SK-N-SH (cell line): ENCODE measurements at regions of chr11 and their contacts with region 1.

Region 1: DNA sequence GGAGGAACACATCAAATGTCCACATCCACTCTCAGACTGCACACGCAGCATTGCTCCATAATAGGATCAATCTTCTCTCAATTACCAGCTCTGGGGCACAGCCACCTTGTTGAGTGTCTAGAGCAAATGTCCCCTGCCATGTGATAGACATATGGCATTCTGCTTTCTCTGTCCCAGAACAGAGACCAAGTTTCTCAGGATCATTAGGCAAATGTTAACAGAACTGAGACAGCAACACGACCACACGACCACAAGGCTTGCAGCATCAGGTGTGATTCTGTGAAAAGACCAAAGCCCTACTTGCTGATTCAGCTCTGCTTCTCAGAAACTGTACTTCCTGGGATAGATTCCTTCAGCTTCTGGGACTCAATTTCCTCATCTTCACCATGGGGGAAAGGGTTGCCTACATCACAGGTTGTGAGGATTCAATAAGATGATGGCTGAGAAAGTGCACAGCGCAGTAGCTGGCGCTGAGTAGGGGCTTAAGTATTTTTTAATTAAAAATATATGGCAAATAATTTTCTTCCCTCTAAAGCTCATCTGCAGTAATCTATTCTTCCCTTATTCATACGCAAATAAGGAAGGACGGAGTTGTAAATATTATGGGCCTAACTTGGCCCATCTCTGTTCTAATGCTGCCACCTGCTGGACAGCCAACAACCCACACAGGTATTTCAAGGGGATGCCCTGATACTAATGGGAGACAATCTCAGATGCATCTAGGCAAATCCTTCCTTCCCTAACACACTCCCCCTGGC is 54.3 kb upstream of the USP47 start:
- DNase-seq: peak; percentile 57
- H3K4me3 ChIP-seq: no peak overlapping the region
- H3K27ac ChIP-seq: no peak overlapping the region
- H3K4me1 ChIP-seq: no peaks in the 10 kb centered on the region; a peak in 1 of 4 replicates
- H3K27me3 ChIP-seq: no peaks in the 10 kb centered on the region
- CTCF ChIP-seq: peak; percentile 94
- EP300 ChIP-seq: no peak
- RAD21 ChIP-seq: peak; percentile 98

Region 2: DNA sequence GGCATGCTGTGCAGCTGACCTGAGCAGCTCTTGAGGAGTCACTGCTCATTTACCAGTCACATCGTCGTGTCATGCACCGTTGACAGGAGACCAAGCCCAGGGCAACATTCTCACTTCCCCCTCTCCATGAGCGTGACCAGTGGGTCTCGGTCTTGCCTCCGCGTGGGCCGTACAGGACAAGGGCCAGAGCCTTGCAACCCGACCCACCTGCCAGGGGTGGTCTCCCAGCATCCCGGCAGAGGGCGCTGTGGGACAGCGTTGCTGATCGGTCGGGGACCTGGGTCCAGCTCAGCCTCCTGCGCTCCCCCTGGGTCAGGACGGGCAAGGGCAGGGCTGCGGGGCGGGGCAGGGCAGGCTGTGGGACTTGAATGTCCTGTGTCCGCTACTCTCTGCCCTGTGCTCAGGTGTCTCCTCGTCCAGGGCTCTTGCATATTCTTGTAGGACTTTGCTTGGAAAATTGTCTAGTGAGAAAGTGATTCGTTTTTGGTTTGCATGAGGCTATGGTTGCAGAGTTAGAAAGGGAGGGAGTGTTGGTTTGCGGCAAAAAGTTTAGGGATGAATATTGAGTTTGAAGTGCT is 995.0 kb before region 1 on chr11:
- CTCF ChIA-PET with region 1: interaction called, 25 read pairs
- POLR2A ChIA-PET with region 1: no interaction called
- DNase-seq: peak; percentile 90
- H3K4me3 ChIP-seq: peak overlapping the region in 1 of 2 experiments; percentile 43; a peak in 1 of 4 replicates
- H3K27ac ChIP-seq: no peak overlapping the region
- H3K4me1 ChIP-seq: no peaks in the 10 kb centered on the region; a peak in 1 of 4 replicates
- H3K27me3 ChIP-seq: no peaks in the 10 kb centered on the region
- CTCF ChIP-seq: peak; percentile 85
- EP300 ChIP-seq: no peak
- RAD21 ChIP-seq: peak; percentile 87

Region 3: DNA sequence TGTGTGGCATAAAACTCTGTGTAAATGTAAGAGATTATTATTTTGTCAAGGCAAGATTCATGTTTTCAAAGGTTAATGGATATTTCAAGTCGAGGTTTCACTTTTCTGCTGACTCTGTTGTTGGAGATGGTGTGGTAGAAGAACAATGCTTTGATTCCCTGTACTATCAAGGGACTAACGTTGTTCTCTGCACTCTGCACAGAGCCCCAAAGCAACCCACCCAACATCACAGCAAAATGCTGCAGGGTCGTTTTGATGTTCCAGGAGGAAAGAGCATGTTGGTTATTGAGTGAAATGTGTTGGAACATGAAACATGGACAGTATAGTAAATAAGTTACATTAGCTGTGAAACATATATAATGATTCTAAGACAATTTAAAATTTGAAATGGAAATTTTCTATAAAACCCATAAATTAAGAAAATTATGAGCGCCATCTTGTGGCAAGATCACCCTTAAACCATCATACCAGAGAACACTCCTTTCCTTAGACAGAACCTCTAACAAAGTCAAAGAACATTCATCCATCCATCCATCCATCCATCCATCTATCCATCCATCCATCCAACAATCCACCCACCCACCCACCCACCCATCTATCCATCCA is 765.3 kb before region 1 on chr11:
- CTCF ChIA-PET with region 1: interaction called, 74 read pairs
- POLR2A ChIA-PET with region 1: interaction called, 3 read pairs
- DNase-seq: peak; percentile 32
- H3K4me3 ChIP-seq: no peak overlapping the region
- H3K27ac ChIP-seq: no peak overlapping the region
- H3K4me1 ChIP-seq: peaks cover 0 to 6% of the 10 kb centered on the region in 2 experiments; a peak in 1 of 4 replicates
- H3K27me3 ChIP-seq: no peaks in the 10 kb centered on the region
- CTCF ChIP-seq: peak; percentile 66
- EP300 ChIP-seq: no peak
- RAD21 ChIP-seq: peak; percentile 67

Region 4: DNA sequence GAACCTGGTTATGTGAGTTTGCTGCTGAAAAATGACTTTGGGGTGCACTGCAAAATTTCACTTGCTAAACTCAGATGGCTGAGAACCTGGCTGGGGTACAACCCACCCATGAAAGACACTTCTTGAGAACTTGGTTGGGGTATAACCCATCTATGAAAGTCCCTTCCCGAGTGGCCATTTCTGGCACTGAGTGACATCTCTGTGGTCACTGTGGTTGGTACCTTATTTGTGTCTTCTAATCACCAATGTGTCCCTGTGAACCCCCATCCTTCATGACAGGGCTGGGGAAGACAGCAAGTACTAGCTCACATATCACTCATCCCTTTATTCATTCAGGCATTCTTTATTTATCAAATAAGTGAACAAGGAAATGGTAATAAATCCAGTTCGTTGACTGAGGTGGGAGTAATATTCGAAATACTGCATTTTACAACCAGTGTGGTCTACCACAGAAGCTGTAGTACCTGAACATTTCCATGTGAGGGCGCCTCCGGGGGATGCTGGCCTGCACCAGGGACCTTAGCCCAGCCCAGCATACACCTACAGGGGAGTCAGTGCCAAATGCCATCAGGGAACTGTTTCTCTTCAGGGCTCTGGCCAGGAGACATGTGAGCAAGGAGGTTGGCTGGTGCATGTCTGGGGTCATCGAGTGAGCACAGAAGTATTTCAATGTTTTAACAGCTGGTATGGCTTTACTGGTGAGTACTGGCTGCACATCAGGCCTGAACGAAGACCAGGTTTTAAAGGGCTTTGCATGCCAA is 556.5 kb before region 1 on chr11:
- CTCF ChIA-PET with region 1: interaction called, 11 read pairs
- POLR2A ChIA-PET with region 1: no interaction called
- DNase-seq: peak; percentile 36
- H3K4me3 ChIP-seq: no peak overlapping the region
- H3K27ac ChIP-seq: no peak overlapping the region
- H3K4me1 ChIP-seq: no peaks in the 10 kb centered on the region
- H3K27me3 ChIP-seq: no peaks in the 10 kb centered on the region
- CTCF ChIP-seq: peak; percentile 44
- EP300 ChIP-seq: no peak
- RAD21 ChIP-seq: peak; percentile 46

Region 5: DNA sequence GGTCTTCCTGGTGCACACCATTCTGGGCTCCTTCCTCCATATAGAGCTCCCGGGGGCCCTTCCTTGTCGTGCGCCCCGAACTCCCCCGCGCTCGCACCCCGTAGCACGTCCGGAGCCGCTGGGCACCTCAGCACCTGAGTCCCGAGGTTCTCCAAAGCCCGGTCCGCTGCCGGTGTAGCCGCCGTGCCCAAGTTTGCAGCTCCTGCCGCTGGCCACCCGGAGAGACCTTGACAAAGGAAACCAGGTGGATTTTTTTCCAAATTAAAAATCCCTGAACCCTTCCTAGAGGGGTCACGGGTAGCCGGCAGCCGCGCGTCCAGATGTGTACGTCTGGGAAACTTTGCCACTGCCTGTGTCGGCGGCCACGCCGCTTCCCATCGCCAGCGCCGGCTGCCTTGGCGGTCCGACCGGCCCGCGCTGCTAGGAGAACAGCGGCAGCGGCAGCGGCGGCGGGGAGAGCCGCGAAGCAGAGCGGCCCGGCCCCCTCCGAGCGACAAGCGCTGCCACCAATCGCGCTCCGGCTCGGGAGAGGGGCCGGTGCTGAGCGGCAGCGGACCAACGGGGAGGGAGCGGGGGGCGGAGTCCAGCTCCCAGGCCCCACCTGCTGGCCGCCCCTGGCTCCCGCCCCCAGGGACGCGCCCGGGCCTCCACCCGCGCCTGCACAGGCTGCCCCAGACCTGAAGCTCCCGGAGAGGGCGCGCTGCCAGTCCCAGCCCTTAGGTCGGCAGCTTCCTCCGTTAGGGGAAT is 165.7 kb before region 1 on chr11 and contains the start of gene GALNT18:
- CTCF ChIA-PET with region 1: interaction called, 10 read pairs
- POLR2A ChIA-PET with region 1: no interaction called
- DNase-seq: peak; percentile 100
- H3K4me3 ChIP-seq: peak within 1 kb of the TSS; percentile 56 to 69
- H3K27ac ChIP-seq: no peak within 1 kb of the TSS; a peak in 1 of 4 replicates
- H3K4me1 ChIP-seq: peaks cover 0 to 26% of the 10 kb centered on the region in 2 experiments; a peak in 1 of 4 replicates
- H3K27me3 ChIP-seq: peaks cover 37% of the 10 kb centered on the region
- CTCF ChIP-seq: peak; percentile 35
- EP300 ChIP-seq: no peak
- RAD21 ChIP-seq: peak; percentile 23; the same call in 1 of the 2 replicates
- polyA plus RNA-seq, gene GALNT18: 0.37 and 0.64 TPM in 2 replicates

Region 6: GRCh38 chr11:11821899-11822298 is 34.4 kb after region 1 on chr11:
- CTCF ChIA-PET with region 1: no interaction called
- POLR2A ChIA-PET with region 1: no interaction called
- DNase-seq: no peak
- H3K4me3 ChIP-seq: no peak overlapping the region
- H3K27ac ChIP-seq: no peak overlapping the region
- H3K4me1 ChIP-seq: no peaks in the 10 kb centered on the region
- H3K27me3 ChIP-seq: no peaks in the 10 kb centered on the region
- CTCF ChIP-seq: no peak
- EP300 ChIP-seq: no peak
- RAD21 ChIP-seq: no peak

Region 7: DNA sequence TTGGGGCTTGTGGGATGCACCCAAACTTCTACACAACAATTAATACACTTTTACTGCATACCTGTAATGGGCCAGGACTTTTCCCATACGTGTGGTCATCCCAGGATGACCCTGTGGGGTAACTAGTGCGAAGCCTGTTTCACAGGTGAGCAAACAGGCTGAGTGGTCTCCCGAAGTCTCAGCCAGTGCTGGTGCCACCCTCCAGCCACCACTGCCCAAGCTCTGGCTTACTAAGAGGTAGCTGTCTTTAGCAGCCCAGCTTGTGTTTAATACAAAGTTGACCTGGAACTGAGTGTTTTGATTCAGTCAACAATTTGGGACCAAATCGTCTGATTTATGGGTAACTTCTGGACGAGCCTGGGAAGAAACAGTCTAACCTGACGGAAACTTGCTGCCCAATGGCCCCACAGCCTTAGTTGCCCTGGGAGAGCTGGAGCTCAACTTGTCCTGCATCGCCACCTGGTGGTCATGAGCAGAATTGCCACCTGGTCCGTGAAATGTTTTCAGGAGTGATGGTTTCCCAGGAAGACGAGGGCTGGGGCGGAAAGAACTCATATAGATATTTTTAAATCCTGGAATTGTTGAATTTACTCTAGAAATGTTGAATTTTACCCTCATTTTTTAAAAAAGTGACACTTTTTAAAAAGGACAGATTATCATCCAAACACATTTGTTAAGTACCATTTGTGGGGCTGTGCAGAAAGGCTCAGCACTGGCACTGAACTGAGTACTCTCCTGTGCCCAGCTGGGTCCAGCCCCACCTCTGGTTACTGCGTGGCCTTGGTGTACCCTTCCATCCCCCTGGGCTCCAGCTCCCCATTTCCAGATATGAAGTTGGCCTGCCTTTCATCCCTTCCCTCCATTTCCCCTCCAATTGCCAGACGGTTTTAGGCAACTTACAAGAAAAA is 494.3 kb after region 1 on chr11:
- CTCF ChIA-PET with region 1: interaction called, 10 read pairs
- POLR2A ChIA-PET with region 1: no interaction called
- DNase-seq: peak; percentile 89
- H3K4me3 ChIP-seq: no peak overlapping the region
- H3K27ac ChIP-seq: peak overlapping the region in 1 of 2 experiments; percentile 100; a peak in 2 of 4 replicates
- H3K4me1 ChIP-seq: peaks cover 14 to 36% of the 10 kb centered on the region in 2 experiments
- H3K27me3 ChIP-seq: no peaks in the 10 kb centered on the region
- CTCF ChIP-seq: peak; percentile 96
- EP300 ChIP-seq: no peak
- RAD21 ChIP-seq: peak; percentile 100